ENCODE measurements at regions of chr5 and their contacts with region 1.

Region 1: GRCh38 chr5:178732281-178732680 is 1.8 kb upstream of the ZNF354A start:
- DNase-seq: no peak
- ATAC-seq: no peak
- H3K4me3 ChIP-seq: no peak overlapping the region
- H3K27ac ChIP-seq: no peak overlapping the region
- H3K4me1 ChIP-seq: peaks cover 0 to 4% of the 10 kb centered on the region in 2 donors
- H3K27me3 ChIP-seq: no peaks in the 10 kb centered on the region
- CTCF ChIP-seq: no peak
- POLR2A ChIP-seq: no peak

Region 2: GRCh38 chr5:178777541-178777940 is 45.3 kb after region 1 on chr5:
- in situ Hi-C with region 1: no loop called
- intact Hi-C with region 1: no loop called
- DNase-seq: no peak
- ATAC-seq: no peak
- H3K4me3 ChIP-seq: no peak overlapping the region
- H3K27ac ChIP-seq: no peak overlapping the region
- H3K4me1 ChIP-seq: no peaks in the 10 kb centered on the region
- H3K27me3 ChIP-seq: no peaks in the 10 kb centered on the region
- CTCF ChIP-seq: no peak
- POLR2A ChIP-seq: no peak

Region 3: GRCh38 chr5:178849316-178849715 is 117.0 kb after region 1 on chr5:
- in situ Hi-C with region 1: loop called in 3 of 4 experiments (anchors 10 kb)
- intact Hi-C with region 1: no loop called
- DNase-seq: no peak
- ATAC-seq: no peak
- H3K4me3 ChIP-seq: no peak overlapping the region
- H3K27ac ChIP-seq: no peak overlapping the region
- H3K4me1 ChIP-seq: no peaks in the 10 kb centered on the region
- H3K27me3 ChIP-seq: no peaks in the 10 kb centered on the region
- CTCF ChIP-seq: no peak
- POLR2A ChIP-seq: no peak

Region 4: GRCh38 chr5:179060116-179061008 is 328.1 kb after region 1 on chr5 and contains the start of gene ZNF354C:
- in situ Hi-C with region 1: loop called (anchors 5 to 25 kb)
- intact Hi-C with region 1: loop called (anchors 1 kb)
- DNase-seq: peak; percentile 74 to 77
- ATAC-seq: peak; percentile 90 to 95
- H3K4me3 ChIP-seq: peak within 1 kb of the TSS; percentile 71 to 91 (median 84)
- H3K27ac ChIP-seq: peak within 1 kb of the TSS; percentile 63 to 76 (median 74)
- H3K4me1 ChIP-seq: peaks cover 5 to 7% of the 10 kb centered on the region in 2 donors
- H3K27me3 ChIP-seq: peaks cover 0 to 4% (median 0%) of the 10 kb centered on the region in 3 donors
- CTCF ChIP-seq: peak in 1 of 5 experiments; percentile 15
- POLR2A ChIP-seq: peak in 1 of 2 donors; percentile 48
- total RNA-seq, gene ZNF354C: 1.6 to 3.5 (median 2.3) TPM

Measured in gastrocnemius medialis (tissue), 4 donors.